Common myeloid progenitor, CD34-positive (primary cell): ENCODE measurements at regions of chr2 and their contacts with region 1.

Region 1: DNA sequence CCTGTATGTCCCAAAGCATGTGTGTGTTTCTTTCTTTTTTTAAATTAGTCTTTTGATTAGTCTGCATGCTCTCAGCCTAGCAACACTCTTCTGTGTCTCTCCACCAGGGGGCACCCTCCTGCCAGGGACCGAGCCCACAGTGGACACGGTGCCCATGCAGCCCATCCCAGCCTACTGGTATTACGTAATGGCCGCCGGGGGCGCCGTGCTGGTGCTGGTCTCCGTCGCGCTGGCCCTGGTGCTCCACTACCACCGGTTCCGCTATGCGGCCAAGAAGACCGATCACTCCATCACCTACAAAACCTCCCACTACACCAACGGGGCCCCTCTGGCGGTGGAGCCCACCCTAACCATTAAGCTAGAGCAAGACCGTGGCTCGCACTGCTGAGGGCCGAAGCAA is 93.8 kb downstream of the NRP2 start:
- DNase-seq: peak; percentile 51 to 72 (median 70)
- H3K4me3 ChIP-seq: no peak overlapping the region
- H3K27ac ChIP-seq: no peak overlapping the region
- H3K4me1 ChIP-seq: peaks cover 24 to 49% (median 39%) of the 10 kb centered on the region in 4 experiments
- H3K27me3 ChIP-seq: no peaks in the 10 kb centered on the region

Region 2: GRCh38 chr2:205675861-205676516 is 100.2 kb before region 1 on chr2:
- CTCF ChIA-PET with region 1: no interaction called
- POLR2A ChIA-PET with region 1: no interaction called
- DNase-seq: peak in 2 of 3 donors; percentile 50 to 55
- H3K4me3 ChIP-seq: peak overlapping the region in 1 of 7 experiments; percentile 19
- H3K27ac ChIP-seq: no peak overlapping the region
- H3K4me1 ChIP-seq: no peaks in the 10 kb centered on the region
- H3K27me3 ChIP-seq: peaks cover 0 to 17% (median 11%) of the 10 kb centered on the region in 5 experiments

Region 3: GRCh38 chr2:205814039-205814364 is 37.9 kb after region 1 on chr2:
- CTCF ChIA-PET with region 1: interaction called, 13 read pairs
- POLR2A ChIA-PET with region 1: no interaction called
- DNase-seq: no peak
- H3K4me3 ChIP-seq: no peak overlapping the region
- H3K27ac ChIP-seq: no peak overlapping the region
- H3K4me1 ChIP-seq: no peaks in the 10 kb centered on the region
- H3K27me3 ChIP-seq: no peaks in the 10 kb centered on the region

Region 4: DNA sequence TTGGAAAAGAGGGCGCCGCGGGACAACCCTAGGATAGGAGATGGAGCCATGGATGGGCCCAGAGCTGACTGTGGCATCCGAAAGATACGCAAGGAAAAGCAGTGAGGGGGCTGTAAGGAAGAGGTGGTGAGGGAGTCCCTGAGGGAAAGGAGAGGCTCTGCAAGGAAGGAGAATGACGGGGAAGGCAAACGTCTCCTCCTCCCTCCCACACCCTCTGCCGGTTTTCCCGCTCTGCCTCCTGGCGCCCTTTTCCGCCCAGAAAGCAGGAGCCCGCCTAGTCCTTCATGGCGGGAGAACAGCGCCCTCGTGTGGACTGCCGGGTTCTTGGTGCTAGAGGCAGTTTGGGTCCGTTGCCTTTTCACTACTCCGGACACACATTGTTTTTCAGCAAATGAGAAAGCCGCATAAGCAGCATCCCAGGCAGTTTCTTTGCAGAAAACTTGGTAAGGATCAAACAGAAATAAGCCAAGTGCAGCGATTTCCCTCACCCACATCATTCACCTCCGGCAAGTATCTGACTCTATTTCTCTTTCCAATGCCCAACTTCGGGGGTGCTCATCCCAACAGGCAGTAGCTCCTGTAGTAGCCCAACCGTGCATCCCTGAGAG is 109.5 kb after region 1 on chr2:
- CTCF ChIA-PET with region 1: interaction called, 36 read pairs
- POLR2A ChIA-PET with region 1: no interaction called
- DNase-seq: peak; percentile 57 to 74 (median 66)
- H3K4me3 ChIP-seq: no peak overlapping the region
- H3K27ac ChIP-seq: no peak overlapping the region
- H3K4me1 ChIP-seq: no peaks in the 10 kb centered on the region
- H3K27me3 ChIP-seq: no peaks in the 10 kb centered on the region

Region 5: DNA sequence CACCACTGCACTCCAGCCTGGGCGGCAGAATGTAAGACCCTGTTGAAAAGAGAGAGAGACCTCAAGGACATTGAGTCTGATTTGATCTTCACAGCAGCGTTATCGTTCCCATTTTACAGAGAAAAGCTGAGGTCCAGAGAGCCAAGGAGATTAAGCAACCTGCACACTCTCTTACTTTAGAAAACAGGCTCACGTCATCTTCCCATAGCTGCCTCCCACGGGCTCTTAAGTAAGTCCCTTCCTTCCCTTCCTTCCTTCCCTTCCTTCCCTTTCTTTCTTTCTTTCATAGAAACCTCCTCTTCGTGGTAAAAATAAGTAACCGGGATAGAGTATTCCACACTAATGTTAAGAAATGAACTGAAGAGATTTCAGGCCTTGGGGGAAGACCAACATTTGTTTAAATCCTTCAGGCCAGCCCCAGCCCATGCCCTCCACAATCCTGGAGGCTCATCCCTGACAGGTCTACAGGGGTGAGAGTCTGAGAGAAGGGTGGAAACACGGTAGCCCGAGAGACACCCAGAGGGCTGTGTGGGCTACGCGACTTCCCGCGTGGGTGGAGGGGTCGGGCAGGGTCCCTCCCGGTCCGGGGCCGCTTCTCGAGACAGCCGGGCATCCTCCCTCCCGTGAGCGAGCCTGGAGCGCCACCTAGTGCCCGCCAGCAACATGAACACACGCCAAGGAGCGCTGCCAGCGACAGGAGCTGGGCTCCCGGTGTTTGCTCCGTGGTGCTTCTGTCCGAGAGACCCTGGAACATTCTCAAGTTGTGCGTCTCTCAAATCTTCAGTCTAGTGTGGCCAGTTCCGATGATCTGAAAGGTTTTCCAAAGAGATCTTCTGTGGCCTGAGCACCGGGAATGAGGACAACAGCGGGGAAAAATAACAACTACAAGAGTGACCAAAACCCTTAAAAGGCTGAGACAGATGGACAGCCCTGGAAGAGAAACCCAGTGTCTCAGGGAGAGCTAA is 149.5 kb after region 1 on chr2:
- CTCF ChIA-PET with region 1: interaction called, 11 read pairs
- POLR2A ChIA-PET with region 1: no interaction called
- DNase-seq: peak; percentile 67 to 79 (median 77)
- H3K4me3 ChIP-seq: peak overlapping the region in 3 of 7 experiments; percentile 40 to 54 (median 41)
- H3K27ac ChIP-seq: no peak overlapping the region
- H3K4me1 ChIP-seq: peaks cover 0 to 8% (median 6%) of the 10 kb centered on the region in 4 experiments
- H3K27me3 ChIP-seq: peaks cover 5 to 33% (median 25%) of the 10 kb centered on the region in 5 experiments